Activated CD8-positive, alpha-beta T cell treated with anti-CD3 and anti-CD28 coated beads for 36 hours (primary cell): ENCODE measurements at regions of chr1 and their contacts with region 1.

Region 1: GRCh38 chr1:222589462-222590302 is at the start of gene TAF1A:
- DNase-seq: peak; percentile 92
- ATAC-seq: peak; percentile 99
- H3K4me3 Mint-ChIP-seq: peak within 1 kb of the TSS; percentile 98
- H3K27ac Mint-ChIP-seq: peak within 1 kb of the TSS; percentile 96
- H3K4me1 Mint-ChIP-seq: peaks cover 44% of the 10 kb centered on the region
- H3K27me3 Mint-ChIP-seq: no peaks in the 10 kb centered on the region
- CTCF ChIP-seq: no peak
- total RNA-seq, gene TAF1A: 18.4 to 19.0 TPM

Region 2: DNA sequence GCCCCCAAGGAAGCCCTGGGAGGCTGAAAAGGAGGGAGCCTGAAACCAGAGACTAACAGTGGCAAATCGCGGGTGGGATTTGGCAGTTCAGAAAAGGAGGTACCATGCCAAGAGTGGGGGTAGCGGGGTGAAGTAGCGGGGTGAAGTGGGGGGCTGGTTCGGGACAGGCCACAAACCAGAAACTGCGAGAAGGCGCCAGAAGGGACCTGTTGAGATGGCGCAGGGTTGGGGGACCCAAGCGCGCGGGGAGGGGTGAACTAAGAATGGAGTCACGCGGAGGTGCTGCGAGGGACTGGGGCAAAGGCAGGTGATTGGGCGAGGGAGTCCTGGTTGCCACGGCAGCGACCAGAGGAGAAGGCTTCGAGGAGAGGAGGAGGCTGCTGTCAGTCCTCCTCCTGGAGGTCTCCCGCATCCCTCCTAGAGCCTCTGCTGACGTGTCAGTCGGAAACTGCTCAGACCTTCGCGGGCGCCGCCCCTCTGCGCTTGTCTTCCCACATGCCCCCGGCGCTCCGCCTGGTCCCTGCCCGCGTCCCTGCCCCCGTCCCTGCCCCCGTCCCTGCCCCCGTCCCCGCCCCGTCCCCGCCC is 27.8 kb after region 1 on chr1:
- CTCF ChIA-PET with region 1: interaction called, 6 read pairs
- POLR2A ChIA-PET with region 1: interaction called, 7 read pairs
- intact Hi-C with region 1: loop called (anchors 2 kb)
- DNase-seq: peak; percentile 95
- ATAC-seq: peak; percentile 95
- H3K4me3 Mint-ChIP-seq: peak overlapping the region; percentile 83
- H3K27ac Mint-ChIP-seq: peak overlapping the region; percentile 90
- H3K4me1 Mint-ChIP-seq: peaks cover 25% of the 10 kb centered on the region
- H3K27me3 Mint-ChIP-seq: peaks cover 13% of the 10 kb centered on the region
- CTCF ChIP-seq: no peak

Region 3: GRCh38 chr1:222697203-222697602 is 107.5 kb after region 1 on chr1:
- CTCF ChIA-PET with region 1: no interaction called
- POLR2A ChIA-PET with region 1: no interaction called
- intact Hi-C with region 1: no loop called
- DNase-seq: no peak
- ATAC-seq: peak; percentile 30
- H3K4me3 Mint-ChIP-seq: no peak overlapping the region
- H3K27ac Mint-ChIP-seq: no peak overlapping the region
- H3K4me1 Mint-ChIP-seq: peaks cover 12% of the 10 kb centered on the region
- H3K27me3 Mint-ChIP-seq: no peaks in the 10 kb centered on the region
- CTCF ChIP-seq: no peak